ENCODE measurements at regions of chr4 and their contacts with region 1.

Region 1: GRCh38 chr4:159175085-159175988 is 72.5 kb downstream of the RAPGEF2 start:
- DNase-seq: peak; percentile 53 to 69
- H3K4me3 ChIP-seq: no peak overlapping the region
- H3K27ac ChIP-seq: peak overlapping the region; percentile 6 to 50 (median 37)
- H3K4me1 ChIP-seq: peaks cover 28 to 49% of the 10 kb centered on the region in 2 donors
- H3K27me3 ChIP-seq: no peaks in the 10 kb centered on the region
- CTCF ChIP-seq: peak; percentile 60 to 91 (median 70)
- POLR2A ChIP-seq: no peak

Region 2: DNA sequence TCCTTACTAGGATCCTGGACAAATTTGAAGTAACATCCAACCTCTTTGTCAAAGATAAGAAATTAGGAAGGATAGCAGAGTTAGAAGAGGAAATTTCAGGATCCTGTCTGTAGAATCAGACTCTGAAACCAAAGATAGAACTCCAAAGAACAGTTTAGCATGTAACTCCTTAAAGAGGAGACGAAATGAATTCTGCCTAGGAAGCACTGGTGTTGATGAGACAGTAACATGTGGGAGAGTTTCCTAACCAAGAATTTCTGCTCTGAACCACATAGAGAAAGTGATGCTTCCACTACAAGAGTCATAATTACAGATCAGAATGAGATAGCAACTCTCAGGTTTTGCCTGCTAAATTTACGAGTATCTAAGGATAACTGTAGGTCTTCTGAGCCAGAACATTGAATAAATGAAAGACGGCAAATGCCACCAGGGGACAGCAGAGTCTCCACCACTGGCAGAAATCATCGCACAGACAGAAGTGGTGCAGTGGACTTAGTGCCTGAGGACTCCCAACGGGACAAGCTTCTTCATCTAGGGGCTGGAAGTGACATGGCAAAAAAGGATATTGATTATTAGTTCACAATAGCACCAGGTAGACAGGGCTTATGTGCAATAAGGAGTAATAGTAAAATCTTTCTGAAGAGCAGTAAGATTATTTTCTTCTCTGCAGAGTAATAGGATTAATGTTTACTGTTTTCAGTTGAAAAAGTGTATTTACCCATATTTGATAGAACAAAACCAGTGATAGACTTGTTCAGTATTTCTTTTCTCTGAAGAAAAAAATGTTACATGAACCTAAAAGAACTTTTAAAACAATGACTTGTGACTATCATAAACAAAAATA is 445.4 kb before region 1 on chr4:
- intact Hi-C with region 1: loop called (anchors 10 kb)
- DNase-seq: peak; percentile 73 to 77
- H3K4me3 ChIP-seq: no peak overlapping the region
- H3K27ac ChIP-seq: no peak overlapping the region
- H3K4me1 ChIP-seq: no peaks in the 10 kb centered on the region
- H3K27me3 ChIP-seq: no peaks in the 10 kb centered on the region
- CTCF ChIP-seq: peak; percentile 74 to 99 (median 92)
- POLR2A ChIP-seq: no peak

Region 3: DNA sequence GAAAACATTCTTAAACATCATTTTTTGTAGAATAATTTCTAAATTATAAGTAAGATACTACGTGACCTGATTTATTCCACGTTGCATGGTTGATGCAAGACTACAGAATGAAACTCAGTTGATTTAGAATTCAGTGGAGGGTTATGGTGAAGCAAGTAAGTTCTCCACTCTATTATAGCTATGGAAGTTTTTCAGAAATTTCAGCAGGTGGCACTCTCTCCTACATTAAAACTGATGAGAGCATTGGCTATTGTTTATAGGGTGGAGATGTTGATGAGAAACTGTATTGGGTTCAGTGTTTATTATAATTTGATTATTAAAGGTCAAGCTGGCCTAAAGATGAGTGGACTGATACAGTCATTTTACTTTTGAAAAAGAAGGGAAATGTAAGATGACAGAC is 318.5 kb before region 1 on chr4:
- intact Hi-C with region 1: loop called (anchors 10 kb)
- DNase-seq: no peak
- H3K4me3 ChIP-seq: no peak overlapping the region
- H3K27ac ChIP-seq: no peak overlapping the region
- H3K4me1 ChIP-seq: no peaks in the 10 kb centered on the region
- H3K27me3 ChIP-seq: no peaks in the 10 kb centered on the region
- CTCF ChIP-seq: peak in 4 of 6 experiments; percentile 18 to 63 (median 51)
- POLR2A ChIP-seq: no peak

Region 4: DNA sequence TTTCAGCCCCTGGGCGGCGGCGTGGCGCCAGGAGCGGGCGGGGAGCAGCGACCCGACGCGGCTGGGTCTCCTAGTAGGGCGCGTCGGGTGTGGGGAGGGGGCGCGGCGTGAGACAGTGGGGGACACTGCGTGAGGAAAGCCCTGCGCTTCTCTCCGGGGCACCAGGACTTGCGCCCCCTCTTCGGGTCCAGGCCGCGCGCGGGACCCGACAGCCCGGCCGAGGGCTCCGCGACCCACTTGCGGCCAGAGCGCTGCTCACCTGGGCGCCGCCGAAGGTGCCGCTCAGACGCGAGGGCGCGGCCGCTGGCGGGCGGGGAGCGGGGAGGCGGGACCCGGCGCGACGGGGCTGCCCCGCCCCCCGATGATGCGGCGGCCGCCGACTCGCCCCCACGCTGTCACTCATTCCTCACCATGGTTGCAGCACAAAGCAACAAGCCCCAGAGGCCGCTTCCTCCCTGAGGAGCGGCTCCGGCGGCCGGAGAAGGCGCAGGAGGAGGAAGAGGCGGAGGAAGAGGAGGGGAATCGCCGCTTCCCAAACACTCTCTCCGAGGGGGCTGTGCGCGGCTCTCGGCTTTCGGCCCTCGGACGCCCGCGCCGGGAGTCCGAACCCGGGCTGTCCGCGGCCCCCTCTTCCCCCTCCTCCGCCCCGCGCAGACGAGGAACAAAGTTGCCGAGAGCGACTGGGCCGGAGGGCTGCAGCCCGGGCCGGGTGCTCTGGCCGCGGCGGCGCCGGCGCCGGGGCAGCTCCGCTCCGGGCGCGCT is 72.5 kb before region 1 on chr4 and contains the start of gene RAPGEF2:
- intact Hi-C with region 1: loop called (anchors 10 kb)
- DNase-seq: peak; percentile 94 to 95
- H3K4me3 ChIP-seq: peak within 1 kb of the TSS; percentile 79 to 88 (median 87)
- H3K27ac ChIP-seq: peak within 1 kb of the TSS; percentile 64 to 97 (median 96)
- H3K4me1 ChIP-seq: peaks cover 24 to 32% of the 10 kb centered on the region in 2 donors
- H3K27me3 ChIP-seq: no peaks in the 10 kb centered on the region
- CTCF ChIP-seq: peak in 1 of 6 experiments; percentile 6
- POLR2A ChIP-seq: peak in 1 of 2 donors; percentile 99
- total RNA-seq, gene RAPGEF2: 60.2 to 109 (median 79.7) TPM